ENCODE measurements at regions of chr4 and their contacts with region 1.

Region 1: DNA sequence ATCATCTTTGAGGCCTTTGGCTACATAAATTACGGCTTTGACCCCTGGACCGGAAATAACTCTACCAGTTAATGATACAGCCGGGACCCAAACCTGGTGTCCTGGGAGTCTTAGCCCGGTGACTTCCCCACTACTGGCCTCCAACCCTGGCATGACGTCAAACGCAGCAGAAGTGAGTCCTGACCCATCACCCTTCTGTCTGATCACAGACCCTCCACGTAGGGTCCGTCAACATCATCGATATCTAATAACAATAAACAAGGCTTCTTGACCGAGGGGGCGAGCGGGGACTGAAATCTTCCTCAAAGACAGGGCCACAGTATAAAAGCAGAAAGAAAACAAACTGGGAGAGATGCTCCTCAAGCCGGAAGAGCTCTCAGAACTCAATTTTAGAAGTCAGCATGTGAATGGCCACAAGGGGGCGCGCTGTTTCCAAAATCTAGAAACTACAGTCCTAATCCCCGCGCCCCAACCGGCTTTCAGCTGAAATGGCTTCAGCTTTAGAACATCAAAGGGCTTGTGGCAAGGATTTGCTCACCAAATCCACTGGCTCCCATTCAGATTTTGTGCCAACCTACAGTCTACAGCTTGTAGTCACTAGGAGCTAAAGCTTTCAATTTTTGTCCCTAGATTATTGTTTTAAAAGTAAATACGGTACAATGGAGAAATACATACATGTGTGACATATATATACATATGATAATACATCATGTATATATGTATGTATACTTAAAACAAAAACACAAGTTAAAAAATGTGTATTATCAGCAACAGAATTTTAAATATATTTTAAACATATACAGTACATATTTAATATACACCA is 46.4 kb upstream of the ENPP6 start:
- DNase-seq: peak; percentile 97
- H3K4me3 Mint-ChIP-seq: peak overlapping the region; percentile 34
- H3K27ac Mint-ChIP-seq: peak overlapping the region; percentile 84
- H3K4me1 Mint-ChIP-seq: peaks cover 48% of the 10 kb centered on the region
- H3K27me3 Mint-ChIP-seq: no peaks in the 10 kb centered on the region

Region 2: DNA sequence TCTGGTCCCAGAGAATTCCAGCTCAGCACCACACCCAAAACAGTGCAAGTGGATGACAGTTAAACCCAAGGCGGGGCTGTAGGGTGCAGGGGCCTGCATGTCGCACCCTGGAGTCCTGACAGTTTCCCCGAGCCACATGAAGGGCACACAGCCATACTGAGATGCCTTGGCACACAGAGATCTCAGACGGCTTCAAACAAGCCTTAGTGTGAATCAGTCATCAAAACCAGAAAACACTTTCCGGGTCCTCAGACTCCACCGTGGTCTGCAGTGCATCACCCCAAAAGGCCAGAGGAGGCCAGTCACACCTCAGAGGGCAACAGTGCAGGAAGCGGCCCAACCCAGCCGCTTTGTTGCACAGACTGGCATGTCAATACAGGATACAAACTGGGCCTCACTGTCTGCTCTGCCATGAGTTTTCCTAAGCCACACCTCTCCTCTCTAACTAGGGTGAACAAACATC is 18.2 kb after region 1 on chr4:
- intact Hi-C with region 1: loop called (anchors 1 kb)
- DNase-seq: peak; percentile 87
- H3K4me3 Mint-ChIP-seq: peak overlapping the region; percentile 66
- H3K27ac Mint-ChIP-seq: peak overlapping the region; percentile 90
- H3K4me1 Mint-ChIP-seq: peaks cover 62% of the 10 kb centered on the region
- H3K27me3 Mint-ChIP-seq: no peaks in the 10 kb centered on the region

Region 3: DNA sequence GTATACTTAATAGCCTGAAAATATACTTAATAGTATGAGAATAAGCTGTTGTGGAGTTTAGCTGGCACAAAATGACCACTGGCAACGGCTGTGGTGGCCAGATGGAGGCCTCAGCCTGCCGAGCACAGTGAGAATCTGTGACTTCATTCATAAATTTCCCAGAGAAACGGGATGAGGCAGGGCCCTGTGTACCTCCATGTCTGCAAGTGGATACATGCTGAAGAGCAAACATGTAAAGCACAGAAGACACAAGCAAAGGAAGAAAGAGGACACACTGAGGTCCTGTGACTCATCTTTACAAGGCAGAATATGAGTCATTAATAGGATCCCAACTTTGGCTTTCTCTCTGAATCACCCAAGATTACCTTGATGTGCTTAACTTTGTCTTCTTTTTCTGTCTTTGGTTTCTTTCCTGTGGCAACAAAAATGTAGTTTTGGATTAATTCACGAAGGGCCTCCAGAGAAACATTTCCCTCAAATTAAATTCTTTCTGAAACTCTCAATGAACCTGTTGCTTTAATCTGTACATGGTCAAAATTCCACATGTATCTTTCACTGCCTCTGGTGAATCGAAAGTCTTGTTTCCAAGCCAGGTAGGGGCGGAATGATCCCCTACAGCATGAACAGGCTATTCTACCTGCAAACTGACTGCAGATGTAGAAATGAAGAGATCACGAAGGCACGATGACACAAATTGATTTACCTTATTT is 153.8 kb after region 1 on chr4:
- intact Hi-C with region 1: loop called (anchors 1 kb)
- DNase-seq: peak; percentile 77
- H3K4me3 Mint-ChIP-seq: peak overlapping the region; percentile 56
- H3K27ac Mint-ChIP-seq: peak overlapping the region; percentile 86
- H3K4me1 Mint-ChIP-seq: peaks cover 68% of the 10 kb centered on the region
- H3K27me3 Mint-ChIP-seq: no peaks in the 10 kb centered on the region

Region 4: DNA sequence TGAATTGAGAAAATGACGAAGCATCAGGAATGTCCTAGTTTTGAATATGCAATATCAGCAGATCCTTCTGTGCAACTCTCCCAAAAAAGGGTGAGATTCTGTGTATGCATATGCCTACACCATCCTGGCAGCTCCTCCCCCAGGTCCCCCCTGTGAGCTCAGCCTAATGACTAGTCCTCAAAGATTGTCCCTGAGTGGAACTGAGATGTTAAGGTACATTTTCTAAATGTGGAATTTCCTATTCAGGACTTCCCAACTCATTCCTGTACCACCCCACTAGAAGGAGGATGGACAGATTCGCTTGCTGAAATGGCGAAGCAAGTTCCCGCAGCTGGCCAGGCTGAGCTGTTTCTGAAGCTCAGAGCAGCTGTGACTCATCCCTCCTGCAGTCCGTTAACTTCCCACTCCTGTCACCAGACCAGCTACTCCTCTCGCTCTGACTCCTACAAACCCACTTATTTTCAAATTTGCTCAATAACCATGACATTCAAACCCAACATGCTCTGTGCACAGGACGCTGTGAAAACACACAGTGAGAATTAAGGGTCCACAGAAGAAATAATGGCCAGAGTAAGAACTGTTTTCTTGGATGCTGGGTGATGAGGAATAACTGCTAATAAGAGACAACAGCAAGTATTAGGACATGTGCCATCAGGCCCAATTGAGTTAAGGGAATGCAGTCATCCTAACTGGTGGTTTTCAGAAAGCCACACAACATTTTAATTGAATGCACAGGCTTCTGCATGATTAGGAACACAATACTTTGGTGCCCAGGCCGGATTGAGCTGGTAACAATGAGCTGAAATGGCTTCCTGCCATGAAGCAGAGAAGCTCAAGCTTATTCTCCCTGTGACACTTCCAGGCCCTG is 250.2 kb after region 1 on chr4:
- intact Hi-C with region 1: loop called (anchors 1 kb)
- DNase-seq: peak; percentile 84
- H3K4me3 Mint-ChIP-seq: peak overlapping the region; percentile 65
- H3K27ac Mint-ChIP-seq: peak overlapping the region; percentile 84
- H3K4me1 Mint-ChIP-seq: peaks cover 40% of the 10 kb centered on the region
- H3K27me3 Mint-ChIP-seq: no peaks in the 10 kb centered on the region

Region 5: DNA sequence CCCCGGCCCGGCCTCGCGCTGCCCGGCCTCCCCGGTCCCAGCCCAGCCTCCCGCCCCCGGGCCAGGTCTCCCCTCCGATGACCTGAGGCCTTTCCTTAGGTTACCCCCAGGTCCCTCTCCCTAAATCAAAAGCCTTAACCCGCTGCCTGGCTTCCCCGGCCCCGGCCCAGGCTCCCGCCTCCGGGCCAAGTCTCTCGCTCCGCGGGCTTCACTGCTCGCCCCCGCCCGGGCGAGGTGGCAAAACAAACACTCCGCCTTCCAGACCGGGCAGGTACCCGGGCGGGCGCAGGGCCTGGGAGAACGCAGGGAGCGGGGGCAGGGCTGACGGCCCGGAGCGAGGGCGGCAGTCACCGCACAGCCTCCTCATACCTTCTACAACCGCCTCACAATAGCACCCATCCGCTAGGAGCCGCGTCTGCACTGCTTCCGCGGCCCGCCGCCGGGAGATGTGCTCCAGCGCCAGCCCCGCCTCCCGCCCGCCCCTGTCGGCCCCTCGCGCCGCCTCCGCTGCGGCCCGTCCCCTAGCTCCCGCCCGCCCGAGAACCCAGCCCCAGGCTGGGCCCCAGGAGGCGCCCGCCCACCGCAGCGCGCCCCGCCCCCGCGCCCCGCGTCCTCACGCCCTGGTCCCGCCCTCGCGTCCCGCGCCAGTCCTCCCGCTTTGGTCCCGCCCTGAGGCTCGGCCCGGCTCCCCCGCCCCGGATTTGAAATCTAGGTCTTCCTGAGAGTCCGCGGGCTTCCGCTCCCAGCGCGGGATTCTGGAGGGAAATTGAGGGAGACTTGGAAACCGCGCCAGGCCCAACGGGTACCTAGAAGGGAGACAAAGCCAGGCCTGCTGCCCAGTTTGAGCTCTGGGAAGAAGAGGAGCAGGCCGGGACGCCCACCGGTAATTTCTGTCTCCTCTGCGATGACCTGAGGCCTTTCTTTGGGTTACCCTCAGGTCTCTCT is 385.2 kb after region 1 on chr4 and contains the starts of genes CASP3 and PRIMPOL:
- intact Hi-C with region 1: loop called (anchors 1 kb)
- DNase-seq: peak; percentile 99
- H3K4me3 Mint-ChIP-seq: peak within 1 kb of the TSS; percentile 99
- H3K27ac Mint-ChIP-seq: peak within 1 kb of the TSS; percentile 92
- H3K4me1 Mint-ChIP-seq: peaks cover 51% of the 10 kb centered on the region
- H3K27me3 Mint-ChIP-seq: no peaks in the 10 kb centered on the region
- total RNA-seq, gene CASP3: 84.8 and 89.8 TPM in 2 replicates
- total RNA-seq, gene PRIMPOL: 14.7 and 17.6 TPM in 2 replicates

Region 6: DNA sequence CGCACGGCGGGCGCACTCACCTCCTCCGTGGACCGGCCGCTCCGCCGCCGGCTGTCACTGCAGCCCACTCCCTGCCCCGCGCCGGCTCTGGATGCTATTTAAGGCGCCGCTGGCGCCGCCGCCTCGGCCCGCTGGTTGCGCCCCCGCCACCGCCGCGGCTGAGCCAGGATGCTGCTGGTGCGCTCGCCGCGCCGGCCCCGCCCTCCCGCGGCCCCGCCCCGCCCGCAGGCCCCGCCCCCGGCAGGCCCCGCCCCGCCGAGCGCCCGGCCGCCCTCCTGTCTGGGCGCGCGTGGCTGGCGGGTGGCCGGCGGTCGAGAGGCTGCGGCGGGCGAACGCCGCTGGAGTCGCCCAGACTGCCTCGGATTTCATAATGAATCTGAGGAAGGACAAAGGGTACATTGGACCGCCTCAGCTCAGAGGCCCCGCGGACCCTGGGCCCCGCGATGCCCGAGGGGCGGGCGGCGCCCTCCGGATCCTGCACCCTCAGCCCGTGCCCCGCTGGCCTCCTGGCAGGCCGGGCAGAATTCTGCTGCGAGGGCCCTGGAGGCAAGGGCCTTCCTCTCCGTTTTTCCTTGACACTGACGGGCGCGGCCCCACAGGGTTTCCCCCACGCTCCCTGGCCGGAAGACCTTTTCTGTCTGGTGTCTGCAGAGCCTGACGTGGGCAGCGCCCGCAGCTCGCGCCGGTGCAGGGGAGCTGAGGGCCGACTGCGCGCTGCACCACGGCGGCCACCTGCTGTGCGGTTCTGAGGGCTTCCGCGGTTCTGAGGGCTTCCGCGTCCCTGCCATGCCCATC is 562.0 kb after region 1 on chr4 and contains the start of gene ACSL1:
- intact Hi-C with region 1: loop called (anchors 10 kb)
- DNase-seq: peak; percentile 93
- H3K4me3 Mint-ChIP-seq: peak within 1 kb of the TSS; percentile 94
- H3K27ac Mint-ChIP-seq: peak within 1 kb of the TSS; percentile 97
- H3K4me1 Mint-ChIP-seq: peaks cover 33% of the 10 kb centered on the region
- H3K27me3 Mint-ChIP-seq: peaks cover 11% of the 10 kb centered on the region
- total RNA-seq, gene ACSL1: 38.3 and 41.7 TPM in 2 replicates